ENCODE measurements at regions of chr6 and their contacts with region 1.

Region 1: DNA sequence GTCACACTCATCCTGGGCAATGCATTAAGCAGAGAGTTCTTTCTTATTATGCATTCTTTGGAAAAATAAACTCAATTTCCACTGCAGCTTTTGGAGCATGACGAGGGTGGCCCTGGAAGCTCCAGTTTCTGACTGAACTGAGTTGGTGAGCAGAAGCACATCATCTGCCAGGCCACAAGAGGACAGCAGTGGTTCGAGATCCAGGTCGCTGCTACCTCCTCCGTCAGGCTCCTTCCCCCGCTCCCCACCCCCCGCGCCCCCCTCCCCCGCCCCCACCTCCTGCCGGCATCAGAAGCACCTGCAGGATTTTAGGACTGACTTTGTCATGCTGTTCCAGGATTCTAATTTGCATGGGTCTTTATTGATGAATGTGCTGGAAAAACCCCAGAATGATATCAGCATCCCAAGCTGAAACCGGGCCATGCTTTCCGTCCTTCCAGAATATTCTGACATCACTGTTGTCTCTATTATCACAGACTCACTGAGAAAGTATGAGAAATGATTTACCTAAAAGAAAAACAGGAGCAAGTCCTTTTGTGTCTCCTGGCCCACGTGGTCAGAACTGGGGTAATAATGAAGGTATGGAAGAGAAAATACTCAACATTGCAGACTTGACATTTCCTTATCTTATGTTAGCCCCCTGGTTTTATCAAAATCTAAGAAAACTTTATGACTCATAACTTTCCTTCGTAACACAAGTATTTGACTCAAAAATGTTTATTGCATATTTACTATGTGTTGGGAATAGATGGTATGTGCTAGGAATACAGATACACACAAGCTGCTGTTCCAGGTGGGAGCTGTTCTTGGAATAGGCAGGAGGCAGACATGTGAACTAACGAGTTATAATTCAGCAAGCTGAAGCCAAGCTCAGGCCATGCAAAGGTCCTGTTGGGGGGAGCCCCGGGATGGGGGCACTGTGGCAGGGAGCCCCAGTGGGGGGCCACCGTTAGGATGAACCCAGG is 220.2 kb upstream of the EXOC2 start:
- DNase-seq: no peak
- H3K4me3 ChIP-seq: no peak overlapping the region
- CTCF ChIP-seq: peak; percentile 75

Region 2: GRCh38 chr6:781350-781961 is 131.7 kb before region 1 on chr6:
- CTCF ChIA-PET with region 1: no interaction called
- POLR2A ChIA-PET with region 1: no interaction called
- DNase-seq: no peak
- H3K4me3 ChIP-seq: no peak overlapping the region
- CTCF ChIP-seq: no peak

Region 3: DNA sequence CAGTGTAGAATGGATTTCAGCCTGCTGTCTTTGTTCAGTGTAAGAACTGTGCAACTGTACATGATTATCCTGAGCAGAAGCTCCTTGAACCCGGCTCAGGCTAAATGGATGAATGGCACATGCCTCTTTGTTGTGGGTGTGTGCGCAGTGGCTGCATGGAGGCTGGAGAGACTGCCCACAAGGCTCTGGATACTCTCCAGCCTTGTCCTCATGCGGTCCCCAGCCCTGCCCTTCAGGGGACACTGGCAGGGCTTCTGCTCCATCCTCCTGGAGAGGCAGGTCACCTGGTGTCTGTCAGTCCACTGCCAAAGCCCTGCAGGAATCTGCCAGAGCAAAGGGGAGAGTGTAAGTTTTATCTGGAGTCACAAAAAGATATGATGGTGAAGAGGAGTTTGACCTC is 21.5 kb after region 1 on chr6:
- CTCF ChIA-PET with region 1: no interaction called
- POLR2A ChIA-PET with region 1: no interaction called
- DNase-seq: no peak
- H3K4me3 ChIP-seq: no peak overlapping the region
- CTCF ChIP-seq: no peak

Region 4: GRCh38 chr6:1381481-1382330 is 468.6 kb after region 1 on chr6:
- CTCF ChIA-PET with region 1: interaction called, 15 read pairs
- POLR2A ChIA-PET with region 1: no interaction called
- DNase-seq: no peak
- H3K4me3 ChIP-seq: no peak overlapping the region
- CTCF ChIP-seq: peak; percentile 79

Measured in AG04449 (cell line).